ENCODE measurements at regions of chr4 and their contacts with region 1.

Region 1: GRCh38 chr4:791871-792625 is 33.9 kb downstream of the CPLX1 start:
- DNase-seq: peak; percentile 55
- H3K4me3 Mint-ChIP-seq: peak overlapping the region; percentile 64
- H3K27ac Mint-ChIP-seq: peak overlapping the region; percentile 72
- H3K4me1 Mint-ChIP-seq: peaks cover 32% of the 10 kb centered on the region
- H3K27me3 Mint-ChIP-seq: peaks cover 50% of the 10 kb centered on the region

Region 2: DNA sequence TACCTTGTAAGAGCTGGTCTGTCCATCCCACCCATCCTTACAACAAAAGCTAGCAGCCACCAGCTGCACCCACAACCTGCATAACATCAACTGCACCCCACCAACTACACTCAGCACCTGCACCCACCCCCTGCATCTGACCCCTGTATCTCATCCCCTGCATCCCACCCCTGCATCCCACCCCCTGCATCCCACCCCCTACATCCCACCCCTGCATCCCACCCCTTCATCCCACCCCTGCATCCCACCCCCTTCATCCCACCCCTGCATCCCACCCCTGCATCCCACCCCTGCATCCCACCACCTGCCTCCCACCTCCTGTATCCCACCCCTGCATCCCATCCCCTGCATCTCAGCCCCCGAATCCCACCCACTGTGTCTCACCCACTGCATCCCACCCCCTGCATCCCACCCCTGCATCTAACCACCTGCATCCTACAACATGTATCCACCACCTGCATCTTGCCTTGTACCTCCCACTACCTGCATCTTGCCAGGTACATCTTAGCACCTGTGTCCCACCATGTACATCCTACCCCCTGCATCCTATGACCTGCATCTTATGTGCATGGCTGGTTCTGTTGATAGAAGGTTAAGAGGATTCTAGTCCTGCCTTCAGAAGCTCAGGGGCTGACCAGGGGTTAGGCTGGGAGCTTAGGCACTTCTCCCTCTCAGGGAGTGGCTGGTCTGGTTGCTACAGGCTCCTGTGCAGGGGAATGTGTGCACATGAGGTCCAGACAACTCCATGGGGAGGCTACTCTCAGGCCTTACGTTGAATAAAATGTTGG is 225.3 kb before region 1 on chr4:
- CTCF ChIA-PET with region 1: no interaction called
- POLR2A ChIA-PET with region 1: no interaction called
- DNase-seq: no peak
- H3K4me3 Mint-ChIP-seq: no peak overlapping the region
- H3K27ac Mint-ChIP-seq: no peak overlapping the region
- H3K4me1 Mint-ChIP-seq: no peaks in the 10 kb centered on the region
- H3K27me3 Mint-ChIP-seq: no peaks in the 10 kb centered on the region

Region 3: DNA sequence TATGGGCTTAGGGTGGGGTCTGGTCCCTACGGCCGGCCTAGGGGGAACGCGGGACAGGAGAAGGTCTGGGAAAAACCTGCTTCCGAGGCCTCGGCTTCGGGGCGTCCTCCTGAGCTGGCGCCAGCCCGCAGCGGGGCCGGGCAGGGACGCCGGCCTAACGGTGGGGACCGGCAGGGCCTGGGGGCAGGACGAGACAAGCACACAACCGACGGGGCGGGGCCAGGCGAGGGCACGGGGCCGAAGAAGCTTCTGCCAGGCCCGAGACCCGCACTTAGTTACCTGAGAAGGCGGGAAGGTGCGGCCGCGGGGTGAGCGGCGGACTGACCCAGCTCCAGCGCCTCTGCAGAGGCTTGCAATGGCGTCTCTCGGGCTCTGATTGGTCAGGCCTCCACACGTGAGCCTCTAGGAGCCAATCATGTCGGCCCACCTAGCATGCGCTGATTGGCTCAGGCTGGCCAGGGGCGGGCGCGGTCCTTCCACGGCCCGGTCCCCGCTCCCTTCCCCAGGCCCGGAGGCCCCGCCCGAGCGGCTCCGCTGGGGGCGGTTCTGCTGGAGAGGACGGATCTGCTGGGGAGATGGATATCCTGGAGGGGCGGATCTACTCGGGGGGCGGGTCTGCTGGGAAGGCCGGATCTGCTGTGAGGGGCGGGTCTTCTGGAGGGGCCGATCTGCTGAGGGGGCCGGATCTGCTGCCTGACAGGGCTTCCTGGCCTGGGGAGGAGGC is 10.4 kb before region 1 on chr4:
- CTCF ChIA-PET with region 1: interaction called, 10 read pairs
- POLR2A ChIA-PET with region 1: no interaction called
- DNase-seq: peak; percentile 99
- H3K4me3 Mint-ChIP-seq: peak overlapping the region; percentile 83
- H3K27ac Mint-ChIP-seq: peak overlapping the region; percentile 91
- H3K4me1 Mint-ChIP-seq: peaks cover 51% of the 10 kb centered on the region
- H3K27me3 Mint-ChIP-seq: peaks cover 17% of the 10 kb centered on the region

Region 4: DNA sequence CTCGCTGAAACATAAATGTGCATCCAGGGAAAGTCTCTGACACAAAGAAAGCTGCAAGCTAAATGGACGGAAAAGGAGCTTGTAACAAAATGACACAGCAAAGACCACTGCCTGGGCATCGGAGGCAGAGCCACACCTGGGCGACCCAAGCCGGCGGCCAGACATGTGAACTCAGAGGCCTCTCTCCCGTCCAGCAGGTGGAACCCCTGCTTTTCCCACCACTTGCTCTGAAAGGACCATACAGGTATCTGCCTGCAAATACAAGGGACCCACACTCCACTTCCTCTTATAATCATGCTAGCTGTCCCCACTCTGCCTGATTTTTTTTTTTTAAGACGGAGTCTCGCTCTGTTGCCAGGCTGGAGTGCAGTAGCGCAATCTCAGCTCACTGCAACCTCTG is 21.9 kb after region 1 on chr4:
- CTCF ChIA-PET with region 1: no interaction called
- POLR2A ChIA-PET with region 1: no interaction called
- DNase-seq: no peak
- H3K4me3 Mint-ChIP-seq: no peak overlapping the region
- H3K27ac Mint-ChIP-seq: no peak overlapping the region
- H3K4me1 Mint-ChIP-seq: no peaks in the 10 kb centered on the region
- H3K27me3 Mint-ChIP-seq: peaks cover 40% of the 10 kb centered on the region

Region 5: DNA sequence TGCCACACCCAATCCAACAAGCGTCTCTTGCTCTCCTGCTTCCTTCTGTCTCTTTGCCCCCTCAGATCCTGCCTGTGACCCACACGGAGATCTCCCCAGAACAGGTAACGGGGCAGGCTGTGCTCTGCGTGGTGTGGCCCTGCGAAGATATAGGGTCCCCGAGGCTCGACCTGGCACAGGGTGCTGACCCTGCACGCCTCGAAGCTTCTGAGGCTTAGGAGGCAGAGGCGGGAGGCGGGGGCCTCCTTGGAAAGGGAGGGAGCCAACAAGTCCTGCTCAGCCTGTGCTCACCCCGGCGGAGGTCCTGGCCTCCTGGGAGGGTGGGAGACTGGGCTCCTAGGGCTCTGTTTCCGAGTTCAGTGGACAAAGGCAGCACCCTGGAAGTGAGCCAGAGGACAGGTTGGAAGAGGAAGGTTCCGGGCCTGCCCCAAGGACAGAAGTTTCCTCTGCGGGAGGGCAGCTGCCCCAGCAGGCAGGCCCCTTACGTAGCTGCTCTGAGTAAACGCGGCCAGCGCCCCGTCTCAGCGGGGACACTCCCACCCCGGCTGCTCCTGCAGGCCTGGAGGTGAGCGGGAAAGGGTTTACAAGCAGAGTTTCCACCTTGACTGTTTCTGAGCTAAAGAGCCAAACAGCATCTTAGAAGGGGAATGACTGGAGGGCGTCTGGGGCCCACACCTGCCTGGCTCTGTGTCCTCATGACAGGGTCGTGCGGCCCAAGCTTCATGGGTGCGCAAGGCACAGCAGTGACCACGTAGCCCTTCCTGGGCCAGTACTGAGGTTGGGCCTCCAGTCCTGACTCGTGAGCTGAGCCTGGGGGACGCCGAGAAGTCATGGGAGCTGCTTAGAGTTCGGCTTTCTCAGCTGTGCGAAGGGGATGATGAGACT is 156.2 kb after region 1 on chr4:
- CTCF ChIA-PET with region 1: no interaction called
- POLR2A ChIA-PET with region 1: no interaction called
- DNase-seq: no peak
- H3K4me3 Mint-ChIP-seq: no peak overlapping the region
- H3K27ac Mint-ChIP-seq: no peak overlapping the region
- H3K4me1 Mint-ChIP-seq: no peaks in the 10 kb centered on the region
- H3K27me3 Mint-ChIP-seq: no peaks in the 10 kb centered on the region